Activated CD4-positive, alpha-beta T cell treated with anti-CD3 and anti-CD28 coated beads for 36 hours (primary cell): ENCODE measurements at regions of chr18 and their contacts with region 1.

Region 1: DNA sequence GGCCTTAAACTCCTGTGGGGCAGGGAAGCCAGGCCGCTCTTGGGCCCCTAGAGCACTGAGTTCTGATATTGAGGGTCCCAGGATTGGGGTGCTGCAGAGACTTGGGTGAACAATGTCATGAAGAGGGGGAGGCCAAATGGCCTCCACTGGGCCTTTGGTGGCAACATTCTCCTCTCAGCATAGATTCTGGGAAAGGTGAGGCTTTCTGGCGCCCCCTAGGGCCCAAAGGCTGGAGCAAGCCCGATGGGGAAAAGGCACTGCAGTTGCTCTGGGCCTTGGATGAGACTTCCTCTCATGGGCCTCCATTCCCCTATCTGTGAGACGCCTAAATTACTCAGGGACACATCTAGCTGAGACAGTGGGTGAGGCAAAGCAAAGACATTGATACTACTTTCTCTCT is 84.8 kb downstream of the ACAA2 start:
- DNase-seq: peak; percentile 75
- ATAC-seq: peak; percentile 65
- H3K4me3 Mint-ChIP-seq: no peak overlapping the region
- H3K27ac Mint-ChIP-seq: no peak overlapping the region
- H3K4me1 Mint-ChIP-seq: peaks cover 6% of the 10 kb centered on the region
- H3K27me3 Mint-ChIP-seq: peaks cover 2% of the 10 kb centered on the region

Region 2: DNA sequence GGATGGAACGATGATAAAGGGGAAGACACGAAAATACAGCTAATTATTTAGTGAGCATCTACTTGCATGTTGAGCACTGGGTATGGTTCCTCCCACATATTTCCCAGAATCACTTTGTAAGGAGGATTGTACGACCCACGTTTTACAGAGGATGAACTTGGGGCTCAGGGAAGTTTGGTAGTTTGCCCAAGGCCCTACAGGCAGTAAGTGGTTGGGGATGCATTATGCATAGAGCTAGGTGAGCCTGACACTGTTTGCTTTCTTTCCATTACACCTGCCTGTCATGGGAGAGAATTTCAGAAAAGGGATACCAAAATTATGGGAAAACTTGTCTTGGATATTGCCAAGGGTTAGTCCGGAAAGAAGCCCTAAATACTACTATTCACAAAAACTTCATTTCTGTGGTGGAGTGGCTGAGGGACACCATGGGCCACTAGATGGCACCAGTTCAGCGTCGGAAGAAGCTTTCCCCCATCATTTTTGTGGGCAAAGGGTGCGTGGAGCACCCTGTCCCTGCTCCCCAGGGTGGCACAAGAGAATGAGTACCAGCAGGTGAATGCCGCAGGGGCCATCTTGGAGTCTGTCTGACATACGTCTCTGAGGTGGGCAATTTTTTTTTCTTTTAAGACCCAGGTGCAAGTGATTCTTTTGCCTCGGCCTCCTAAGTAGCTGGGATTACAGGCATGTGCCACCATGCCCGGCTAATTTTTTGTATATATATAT is 218.0 kb before region 1 on chr18:
- CTCF ChIA-PET with region 1: no interaction called
- POLR2A ChIA-PET with region 1: no interaction called
- intact Hi-C with region 1: loop called in 1 of 2 experiments (anchors 1 kb)
- DNase-seq: peak; percentile 70
- ATAC-seq: peak; percentile 61
- H3K4me3 Mint-ChIP-seq: no peak overlapping the region
- H3K27ac Mint-ChIP-seq: no peak overlapping the region
- H3K4me1 Mint-ChIP-seq: no peaks in the 10 kb centered on the region
- H3K27me3 Mint-ChIP-seq: peaks cover 10% of the 10 kb centered on the region

Region 3: GRCh38 chr18:49555641-49556040 is 172.9 kb before region 1 on chr18:
- CTCF ChIA-PET with region 1: no interaction called
- POLR2A ChIA-PET with region 1: no interaction called
- intact Hi-C with region 1: loop called in 1 of 2 experiments (anchors 2 kb)
- DNase-seq: no peak
- ATAC-seq: no peak
- H3K4me3 Mint-ChIP-seq: no peak overlapping the region
- H3K27ac Mint-ChIP-seq: no peak overlapping the region
- H3K4me1 Mint-ChIP-seq: peaks cover 3% of the 10 kb centered on the region
- H3K27me3 Mint-ChIP-seq: peaks cover 36% of the 10 kb centered on the region

Region 4: DNA sequence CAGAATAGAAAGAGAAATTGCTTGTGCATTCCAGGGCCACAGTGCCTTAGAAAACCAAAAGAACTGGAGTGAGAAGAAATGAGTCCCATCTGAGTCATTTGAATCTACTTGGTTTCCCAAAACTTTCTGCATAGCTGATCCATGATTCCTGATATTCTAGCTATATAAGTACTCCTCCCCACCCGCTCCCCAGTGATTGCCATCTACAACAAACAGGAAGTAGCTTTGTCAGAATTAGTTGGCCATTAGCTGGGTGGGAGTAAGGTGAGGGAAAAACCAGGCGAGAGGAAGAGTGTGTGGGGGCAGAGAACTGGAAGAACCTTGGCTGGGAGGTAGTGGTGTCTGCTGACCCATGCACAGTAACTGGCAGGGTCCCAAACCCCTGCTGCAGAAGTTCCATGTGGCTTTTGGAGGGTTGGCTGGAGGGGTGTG is 37.3 kb before region 1 on chr18:
- CTCF ChIA-PET with region 1: interaction called, 3 read pairs
- POLR2A ChIA-PET with region 1: no interaction called
- intact Hi-C with region 1: loop called in 1 of 2 experiments (anchors 1 kb)
- DNase-seq: no peak
- ATAC-seq: no peak
- H3K4me3 Mint-ChIP-seq: no peak overlapping the region
- H3K27ac Mint-ChIP-seq: no peak overlapping the region
- H3K4me1 Mint-ChIP-seq: peaks cover 5% of the 10 kb centered on the region
- H3K27me3 Mint-ChIP-seq: no peaks in the 10 kb centered on the region